Lower leg skin (tissue), 4 donors: ENCODE measurements at regions of chr15 and their contacts with region 1.

Region 1: DNA sequence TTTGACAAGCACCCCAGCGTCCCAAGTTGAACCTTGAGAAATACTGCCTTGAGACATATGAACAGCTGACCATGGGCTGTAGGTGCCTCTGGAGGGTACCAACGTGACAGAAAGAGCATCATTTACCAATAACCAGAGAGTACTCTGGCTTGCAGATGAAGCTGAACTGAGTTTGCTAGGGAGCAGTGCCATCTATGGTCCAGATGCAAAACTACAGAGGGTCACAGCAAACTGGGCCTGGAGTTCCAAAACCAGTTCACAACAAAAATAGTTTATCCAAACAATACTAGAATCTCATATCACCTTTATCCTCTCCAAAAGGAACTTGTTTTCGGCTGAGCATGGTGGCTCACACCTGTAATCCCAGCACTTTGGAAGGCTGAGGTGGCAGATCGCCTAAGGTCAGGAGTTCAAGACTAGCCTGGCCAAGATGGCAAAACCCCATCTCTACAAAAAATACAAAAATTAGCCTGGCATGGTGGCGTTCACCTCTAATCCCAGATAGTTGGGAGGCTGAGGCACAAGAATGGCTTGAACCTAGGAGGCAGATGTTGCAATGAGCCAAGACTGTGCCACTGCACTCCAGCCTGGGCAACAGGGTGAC is 69.3 kb downstream of the CHAC1 start:
- DNase-seq: peak in 1 of 2 donors; percentile 71
- H3K4me3 ChIP-seq: no peak overlapping the region
- CTCF ChIP-seq: no peak
- POLR2A ChIP-seq: no peak

Region 2: GRCh38 chr15:40743921-40744814 is 278.4 kb before region 1 on chr15:
- intact Hi-C with region 1: no loop called
- DNase-seq: no peak
- H3K4me3 ChIP-seq: no peak overlapping the region
- CTCF ChIP-seq: no peak
- POLR2A ChIP-seq: no peak

Region 3: DNA sequence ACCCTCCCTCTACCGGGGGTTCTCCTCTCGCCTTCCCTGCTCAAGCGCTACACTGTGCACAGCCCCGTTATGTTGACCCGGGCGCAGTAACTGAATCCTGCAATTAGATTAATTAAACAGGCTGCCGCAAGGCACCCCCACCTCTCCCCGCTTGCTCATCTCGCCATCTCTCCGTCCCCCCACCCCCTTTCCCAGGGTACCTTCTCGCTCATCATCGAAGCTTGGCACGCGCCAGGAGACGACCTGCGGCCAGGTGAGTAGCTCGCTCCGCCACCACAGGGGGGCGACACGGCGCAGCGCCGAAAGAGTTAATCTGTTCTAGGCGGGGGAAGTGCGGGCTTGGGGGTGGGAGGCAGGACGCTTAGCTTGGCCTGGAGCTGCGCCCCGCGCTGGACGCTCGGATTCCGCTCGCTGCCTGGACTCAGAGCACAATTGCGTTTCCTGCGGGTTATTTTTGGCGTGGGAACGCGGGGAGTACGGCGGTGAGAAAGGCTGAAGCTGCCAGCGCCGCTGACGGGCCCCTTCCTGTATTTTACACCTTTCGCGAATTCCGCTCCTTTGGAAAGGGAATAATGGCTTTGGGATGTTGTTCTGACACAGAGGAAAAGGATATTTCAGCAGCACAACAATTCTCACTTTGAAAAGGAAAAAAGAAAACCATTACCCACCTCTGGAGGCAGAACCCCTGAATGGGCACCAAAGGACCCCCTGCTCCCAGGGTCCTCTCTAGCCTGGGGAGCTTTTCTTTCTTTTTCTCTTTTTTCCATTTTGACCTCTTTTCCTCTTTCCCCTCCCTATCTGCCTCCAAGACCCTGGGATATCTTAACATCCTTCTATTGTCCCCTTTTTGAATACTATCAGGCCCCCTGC is 91.9 kb before region 1 on chr15:
- intact Hi-C with region 1: loop called (anchors 10 kb)
- DNase-seq: no peak
- H3K4me3 ChIP-seq: no peak overlapping the region
- CTCF ChIP-seq: no peak
- POLR2A ChIP-seq: no peak